ENCODE measurements at regions of chr12 and their contacts with region 1.

Region 1: DNA sequence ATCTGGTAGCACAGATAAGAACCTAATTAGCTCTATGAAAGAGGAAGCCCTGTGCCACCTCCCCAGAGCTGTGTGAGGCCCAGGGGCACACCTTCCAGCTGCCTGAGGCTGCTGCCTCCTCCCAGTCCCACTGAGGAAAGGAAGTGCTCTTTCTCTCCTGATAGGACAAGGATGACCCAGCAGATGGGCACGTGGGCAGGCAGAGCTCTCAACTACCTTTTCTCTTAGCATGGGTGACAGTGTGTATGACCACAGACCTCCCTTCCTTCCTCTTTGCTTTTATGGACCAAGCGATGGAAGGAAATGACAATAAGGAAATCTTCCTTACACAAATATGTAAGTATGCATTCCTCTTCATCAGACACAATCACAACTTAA is 127.6 kb upstream of the AMIGO2 start:
- DNase-seq: peak; percentile 80 to 90 (median 85)
- H3K4me3 ChIP-seq: peak overlapping the region in 1 of 3 experiments; percentile 19
- H3K4me3 Mint-ChIP-seq: peak overlapping the region; percentile 12 to 53
- H3K27ac ChIP-seq: peak overlapping the region; percentile 19 to 69
- H3K27ac Mint-ChIP-seq: peak overlapping the region; percentile 83 to 93 (median 86)
- H3K4me1 ChIP-seq: peaks cover 37 to 41% of the 10 kb centered on the region in 2 donors
- H3K4me1 Mint-ChIP-seq: peaks cover 42% of the 10 kb centered on the region
- H3K27me3 ChIP-seq: no peaks in the 10 kb centered on the region
- H3K27me3 Mint-ChIP-seq: peaks cover 0 to 2% (median 0%) of the 10 kb centered on the region in 3 donors
- CTCF ChIP-seq: no peak

Region 2: GRCh38 chr12:47276621-47277309 is 69.4 kb after region 1 on chr12:
- intact Hi-C with region 1: loop called in 1 of 2 experiments (anchors 5 kb)
- DNase-seq: peak; percentile 57 to 75 (median 66)
- H3K4me3 ChIP-seq: peak overlapping the region in 1 of 3 experiments; percentile 35
- H3K4me3 Mint-ChIP-seq: peak overlapping the region in 1 of 2 donors; percentile 56
- H3K27ac ChIP-seq: peak overlapping the region in 1 of 2 donors; percentile 62
- H3K27ac Mint-ChIP-seq: peak overlapping the region; percentile 36 to 89 (median 77)
- H3K4me1 ChIP-seq: peaks cover 31 to 35% of the 10 kb centered on the region in 2 donors
- H3K4me1 Mint-ChIP-seq: peaks cover 39% of the 10 kb centered on the region
- H3K27me3 ChIP-seq: no peaks in the 10 kb centered on the region
- H3K27me3 Mint-ChIP-seq: peaks cover 0 to 2% (median 0%) of the 10 kb centered on the region in 3 donors
- CTCF ChIP-seq: no peak